IMR-90 (cell line): ENCODE measurements at regions of chr6 and their contacts with region 1.

Region 1: GRCh38 chr6:121881974-121882667 is 446.7 kb downstream of the GJA1 start:
- DNase-seq: peak; percentile 92
- ATAC-seq: peak; percentile 78
- H3K4me3 ChIP-seq: no peak overlapping the region
- H3K27ac ChIP-seq: peak overlapping the region; percentile 13; the same call in 1 of the 2 replicates
- H3K4me1 ChIP-seq: peaks cover 19% of the 10 kb centered on the region
- H3K27me3 ChIP-seq: no peaks in the 10 kb centered on the region
- CTCF ChIP-seq: no peak
- POLR2A ChIP-seq: no peak
- RAD21 ChIP-seq: no peak

Region 2: GRCh38 chr6:121809211-121809610 is 72.9 kb before region 1 on chr6:
- CTCF ChIA-PET with region 1: no interaction called
- POLR2A ChIA-PET with region 1: no interaction called
- dilution Hi-C with region 1: no loop called
- in situ Hi-C with region 1: no loop called
- intact Hi-C with region 1: loop called (anchors 2 kb)
- DNase-seq: no peak
- ATAC-seq: no peak; the same call in 1 of the 2 replicates
- H3K4me3 ChIP-seq: no peak overlapping the region
- H3K27ac ChIP-seq: peak overlapping the region; percentile 13; the same call in 1 of the 2 replicates
- H3K4me1 ChIP-seq: peaks cover 12% of the 10 kb centered on the region
- H3K27me3 ChIP-seq: no peaks in the 10 kb centered on the region
- CTCF ChIP-seq: no peak
- POLR2A ChIP-seq: no peak
- RAD21 ChIP-seq: no peak

Region 3: GRCh38 chr6:122014961-122015360 is 132.8 kb after region 1 on chr6:
- CTCF ChIA-PET with region 1: interaction called, 4 read pairs
- POLR2A ChIA-PET with region 1: no interaction called
- dilution Hi-C with region 1: no loop called
- in situ Hi-C with region 1: no loop called
- intact Hi-C with region 1: loop called (anchors 10 kb)
- DNase-seq: peak; percentile 90
- ATAC-seq: peak; percentile 94
- H3K4me3 ChIP-seq: no peak overlapping the region
- H3K27ac ChIP-seq: peak overlapping the region; percentile 24; the same call in 1 of the 2 replicates
- H3K4me1 ChIP-seq: peaks cover 2% of the 10 kb centered on the region
- H3K27me3 ChIP-seq: no peaks in the 10 kb centered on the region
- CTCF ChIP-seq: no peak
- POLR2A ChIP-seq: no peak
- RAD21 ChIP-seq: no peak